ENCODE measurements at regions of chr3 and their contacts with region 1.

Region 1: DNA sequence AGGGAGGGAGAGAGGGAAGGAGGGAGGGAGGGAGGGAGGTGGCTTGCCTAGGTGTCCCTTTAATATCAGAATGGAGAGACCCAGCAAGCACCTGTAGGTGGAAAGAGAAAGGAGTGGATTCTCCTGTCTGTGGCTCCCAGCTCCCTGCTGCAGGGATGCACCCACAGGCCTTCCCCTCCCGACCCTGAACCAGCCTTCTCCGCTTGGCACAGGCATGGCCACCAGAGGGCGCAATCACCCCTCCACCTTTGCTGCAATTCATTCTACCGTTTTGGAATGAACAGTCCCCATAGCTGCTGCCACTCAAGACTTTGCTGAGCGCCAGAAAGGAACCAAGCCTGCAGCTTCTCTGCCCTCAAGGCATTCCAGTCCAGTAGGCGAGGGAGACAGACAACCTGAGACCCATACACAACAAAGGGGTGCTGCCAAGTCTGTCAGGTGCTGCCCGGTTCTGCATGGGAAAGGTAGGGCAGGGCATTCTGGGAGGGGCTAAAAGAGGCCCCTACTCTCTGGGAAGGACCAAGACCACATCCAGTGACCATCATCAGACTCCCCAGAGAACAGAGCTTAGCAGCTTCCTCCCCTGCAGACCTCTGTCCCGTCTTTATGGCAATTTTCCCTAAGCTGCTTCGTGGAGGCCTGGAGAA is 4.9 kb downstream of the TLR9 start:
- DNase-seq: peak; percentile 95
- ATAC-seq: peak; percentile 78
- H3K4me3 Mint-ChIP-seq: no peak overlapping the region
- H3K27ac Mint-ChIP-seq: peak overlapping the region; percentile 29
- H3K4me1 Mint-ChIP-seq: peaks cover 83% of the 10 kb centered on the region
- H3K27me3 Mint-ChIP-seq: no peaks in the 10 kb centered on the region

Region 2: DNA sequence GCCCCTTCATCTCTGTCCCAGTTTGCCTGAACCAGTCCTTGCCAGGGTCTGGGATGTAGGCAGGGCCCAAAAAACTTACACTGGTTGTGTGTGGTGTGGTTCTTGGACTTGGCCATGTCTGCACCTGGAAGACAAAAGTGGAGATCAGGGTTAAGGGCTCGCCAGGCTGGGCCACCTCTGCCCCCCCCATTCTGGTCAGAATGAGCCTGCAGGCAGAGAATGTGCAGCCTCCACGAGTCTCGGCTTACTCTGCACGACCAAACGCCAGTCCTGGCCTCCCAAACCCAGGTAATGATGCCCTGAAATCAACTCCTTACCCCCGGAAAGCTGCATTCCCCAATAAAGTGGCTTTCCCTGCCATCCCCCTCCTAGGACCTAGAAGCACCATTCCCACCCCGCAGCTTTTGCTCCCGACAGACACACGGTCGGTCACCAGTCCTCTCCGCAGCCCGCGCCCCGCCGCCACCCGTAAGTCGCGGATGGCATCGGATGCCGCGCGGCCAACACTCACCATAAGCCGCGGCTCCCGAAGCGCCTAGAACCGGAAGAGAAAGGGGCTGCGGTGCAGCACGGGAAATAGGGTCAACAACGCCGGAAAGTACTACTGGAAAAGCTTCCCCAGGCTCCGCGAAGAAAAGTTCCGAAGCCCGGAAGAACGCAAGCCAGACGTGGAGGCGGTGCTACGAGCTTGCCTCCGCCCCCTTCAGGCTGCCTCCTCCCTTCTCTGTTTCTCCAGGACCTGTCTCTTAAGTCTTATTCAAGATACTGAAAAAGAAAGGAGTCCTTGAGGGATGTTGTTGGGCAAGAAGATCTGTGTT is 224.9 kb before region 1 on chr3 and contains the start of gene RPL29:
- CTCF ChIA-PET with region 1: interaction called, 3 read pairs
- POLR2A ChIA-PET with region 1: no interaction called
- intact Hi-C with region 1: loop called in 1 of 2 experiments (anchors 5 kb)
- DNase-seq: peak; percentile 96
- ATAC-seq: peak; percentile 95
- H3K4me3 Mint-ChIP-seq: peak within 1 kb of the TSS; percentile 100
- H3K27ac Mint-ChIP-seq: peak within 1 kb of the TSS; percentile 100
- H3K4me1 Mint-ChIP-seq: peaks cover 26% of the 10 kb centered on the region
- H3K27me3 Mint-ChIP-seq: no peaks in the 10 kb centered on the region
- total RNA-seq, gene RPL29: 1,975 to 2,071 TPM

Region 3: GRCh38 chr3:52175416-52176179 is 44.9 kb before region 1 on chr3:
- CTCF ChIA-PET with region 1: no interaction called
- POLR2A ChIA-PET with region 1: no interaction called
- intact Hi-C with region 1: no loop called
- DNase-seq: no peak
- ATAC-seq: no peak
- H3K4me3 Mint-ChIP-seq: no peak overlapping the region
- H3K27ac Mint-ChIP-seq: no peak overlapping the region
- H3K4me1 Mint-ChIP-seq: no peaks in the 10 kb centered on the region
- H3K27me3 Mint-ChIP-seq: no peaks in the 10 kb centered on the region

Region 4: GRCh38 chr3:52231502-52232293 is 11.2 kb after region 1 on chr3:
- CTCF ChIA-PET with region 1: interaction called, 71 read pairs
- POLR2A ChIA-PET with region 1: no interaction called
- intact Hi-C with region 1: no loop called
- DNase-seq: peak; percentile 89
- ATAC-seq: peak; percentile 66
- H3K4me3 Mint-ChIP-seq: no peak overlapping the region
- H3K27ac Mint-ChIP-seq: peak overlapping the region; percentile 63
- H3K4me1 Mint-ChIP-seq: peaks cover 44% of the 10 kb centered on the region
- H3K27me3 Mint-ChIP-seq: no peaks in the 10 kb centered on the region

Region 5: GRCh38 chr3:52291508-52292181 is 71.1 kb after region 1 on chr3:
- CTCF ChIA-PET with region 1: interaction called, 8 read pairs
- POLR2A ChIA-PET with region 1: interaction called, 3 read pairs
- intact Hi-C with region 1: loop called in 1 of 2 experiments (anchors 1 kb)
- DNase-seq: peak; percentile 66
- ATAC-seq: no peak
- H3K4me3 Mint-ChIP-seq: no peak overlapping the region
- H3K27ac Mint-ChIP-seq: no peak overlapping the region
- H3K4me1 Mint-ChIP-seq: peaks cover 16% of the 10 kb centered on the region
- H3K27me3 Mint-ChIP-seq: no peaks in the 10 kb centered on the region

Region 6: DNA sequence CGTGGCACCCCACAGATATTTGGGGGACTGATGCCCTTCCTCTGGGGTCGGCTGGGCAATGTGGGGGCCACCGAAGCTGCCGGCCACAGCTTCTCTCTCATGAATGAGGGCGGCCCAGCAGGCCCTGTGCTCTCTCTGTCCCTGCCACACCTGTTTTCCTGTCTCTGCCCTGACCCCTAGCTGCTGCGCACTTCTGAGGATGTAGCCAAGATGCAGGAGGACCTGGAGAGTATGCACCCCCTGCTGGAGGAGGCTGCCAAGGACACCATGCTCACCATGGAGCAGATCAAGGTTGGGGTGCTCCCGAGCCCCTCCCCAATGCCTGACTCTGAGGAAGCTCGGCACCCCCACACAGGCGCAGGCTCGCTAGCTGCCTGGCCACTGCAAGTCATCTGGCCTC is 164.7 kb after region 1 on chr3:
- CTCF ChIA-PET with region 1: interaction called, 6 read pairs
- POLR2A ChIA-PET with region 1: no interaction called
- intact Hi-C with region 1: loop called in 1 of 2 experiments (anchors 1 kb)
- DNase-seq: peak; percentile 67
- ATAC-seq: peak; percentile 77
- H3K4me3 Mint-ChIP-seq: no peak overlapping the region
- H3K27ac Mint-ChIP-seq: no peak overlapping the region
- H3K4me1 Mint-ChIP-seq: no peaks in the 10 kb centered on the region
- H3K27me3 Mint-ChIP-seq: no peaks in the 10 kb centered on the region